GM18951 (cell line): ENCODE measurements at regions of chr7 and their contacts with region 1.

Region 1: DNA sequence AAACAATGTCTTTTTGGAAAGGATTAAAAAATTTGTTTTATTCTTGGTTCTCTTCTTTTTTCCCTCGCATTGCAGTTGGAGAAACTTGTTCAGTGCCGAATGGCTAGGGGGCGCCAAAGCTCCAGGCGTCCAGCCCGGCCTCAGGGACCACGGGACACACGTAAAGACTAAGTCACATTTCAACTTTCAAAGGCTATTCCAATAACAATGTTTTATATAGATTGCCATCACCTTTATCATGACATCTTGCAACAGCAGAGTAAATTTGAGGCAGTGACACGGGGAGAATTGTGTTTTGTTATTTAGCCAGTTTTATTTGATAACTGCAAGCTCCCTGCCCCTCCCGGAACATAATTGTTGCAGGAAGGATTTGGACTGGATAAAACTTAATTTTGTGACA is 2.2 kb upstream of the IGFBP3 start:
- POLR2A ChIP-seq: no peak

Region 2: GRCh38 chr7:46047581-46047980 is 124.3 kb after region 1 on chr7:
- in situ Hi-C with region 1: no loop called
- POLR2A ChIP-seq: no peak

Region 3: DNA sequence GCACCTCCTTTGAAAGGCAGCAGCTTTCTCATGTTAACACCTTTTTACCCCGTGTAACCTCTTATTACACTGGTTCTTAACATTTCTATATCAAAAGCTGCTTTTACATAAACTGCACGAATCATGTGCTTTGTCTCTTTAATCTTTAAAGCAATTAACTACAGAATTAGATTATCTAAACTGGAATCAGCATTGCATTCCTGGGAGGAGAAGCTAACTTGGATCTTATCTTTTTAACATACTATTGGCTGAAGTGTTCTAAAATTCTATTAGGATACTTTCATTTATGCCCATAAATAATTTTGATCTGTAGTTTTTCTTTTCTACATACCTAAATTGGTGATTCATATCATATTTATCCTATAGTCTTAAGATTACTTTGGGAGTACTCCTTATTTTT is 426.2 kb after region 1 on chr7:
- in situ Hi-C with region 1: loop called (anchors 10 kb)
- POLR2A ChIP-seq: no peak

Region 4: GRCh38 chr7:46558482-46559193 is 635.3 kb after region 1 on chr7:
- in situ Hi-C with region 1: no loop called
- POLR2A ChIP-seq: no peak

Region 5: DNA sequence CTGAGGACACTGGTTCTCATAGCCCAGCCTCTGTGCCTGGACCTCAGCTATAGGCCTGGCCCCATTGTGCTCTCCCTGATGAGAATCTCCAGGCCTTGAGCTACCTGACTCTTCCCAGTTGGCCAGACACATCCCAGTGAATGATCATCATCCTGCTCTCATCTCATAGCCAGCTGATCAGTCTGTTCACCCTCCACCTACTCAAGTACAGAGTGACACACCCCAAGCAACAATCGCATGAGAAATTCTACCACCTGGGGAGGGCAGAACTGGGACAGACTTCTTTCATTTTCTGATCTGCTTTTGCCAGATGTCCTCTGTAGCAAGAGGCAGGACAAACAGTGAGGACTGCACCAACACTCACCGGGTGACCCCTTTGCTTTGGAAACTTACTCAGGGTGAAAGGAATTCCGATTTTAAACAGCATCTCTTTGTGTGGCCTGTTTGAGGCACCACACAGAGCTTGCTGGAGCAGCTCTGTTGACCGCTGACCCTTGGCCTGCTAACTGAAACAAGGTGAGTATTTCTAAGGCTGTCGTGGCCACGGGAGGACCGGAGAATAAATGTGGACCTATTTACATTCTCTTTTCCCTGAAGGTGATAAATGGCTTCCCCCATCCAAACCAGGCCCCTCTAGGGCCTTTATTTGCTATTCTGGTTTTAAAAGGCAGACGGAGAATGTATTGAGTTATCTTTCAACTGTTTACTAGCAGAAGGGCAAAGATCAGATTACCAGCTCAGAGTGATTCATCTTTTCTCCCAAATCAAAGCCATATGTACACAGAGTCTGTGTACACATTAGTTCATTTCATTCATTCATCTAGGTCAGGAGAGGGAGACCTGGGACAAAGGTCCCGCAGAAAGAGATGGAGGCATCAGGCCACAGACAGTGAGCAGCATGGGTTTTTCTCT is 1840.0 kb after region 1 on chr7:
- in situ Hi-C with region 1: no loop called
- POLR2A ChIP-seq: no peak